Endothelial cell of umbilical vein (primary cell): ENCODE measurements at regions of chr2 and their contacts with region 1.

Region 1: DNA sequence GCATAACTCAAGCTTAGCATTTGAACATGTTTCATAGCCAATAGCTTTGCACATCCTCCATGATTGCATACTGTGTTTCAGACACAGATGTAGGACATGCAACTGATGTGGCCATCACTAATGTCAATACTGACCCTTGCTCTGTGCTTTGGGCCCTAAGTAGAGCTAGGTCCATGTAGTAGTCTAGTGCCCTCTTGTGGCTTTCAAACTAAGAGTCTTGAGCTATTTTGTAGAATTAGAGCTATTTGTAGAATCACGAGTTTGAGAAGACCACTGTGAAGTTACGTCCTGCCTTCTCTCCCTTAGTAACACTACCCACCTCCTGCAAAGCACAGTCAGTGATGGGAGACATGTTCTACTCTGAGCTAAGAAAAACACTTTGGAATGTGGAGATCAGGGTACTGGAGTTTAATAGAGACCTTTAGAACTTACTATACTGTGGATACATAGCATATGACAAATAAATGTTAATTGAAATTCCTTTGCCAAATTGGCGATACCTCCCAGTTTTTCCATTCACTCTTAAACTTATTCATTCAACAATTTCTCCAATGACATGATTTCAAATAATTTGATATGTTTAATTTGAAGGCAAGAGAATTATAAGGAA is 306.5 kb upstream of the TNP1 start:
- DNase-seq: peak; percentile 58
- H3K4me3 ChIP-seq: no peak overlapping the region
- H3K27ac ChIP-seq: no peak overlapping the region
- H3K4me1 ChIP-seq: peaks cover 2% of the 10 kb centered on the region
- H3K27me3 ChIP-seq: peaks cover 0 to under 1% of the 10 kb centered on the region in 2 experiments
- CTCF ChIP-seq: peak; percentile 33 to 55
- POLR2A ChIP-seq: no peak

Region 2: GRCh38 chr2:216519154-216519762 is 647.1 kb before region 1 on chr2:
- CTCF ChIA-PET with region 1: interaction called, 6 read pairs
- POLR2A ChIA-PET with region 1: no interaction called
- dilution Hi-C with region 1: no loop called
- intact Hi-C with region 1: loop called (anchors 5 kb)
- DNase-seq: peak; percentile 77
- H3K4me3 ChIP-seq: no peak overlapping the region
- H3K27ac ChIP-seq: no peak overlapping the region
- H3K4me1 ChIP-seq: no peaks in the 10 kb centered on the region
- H3K27me3 ChIP-seq: no peaks in the 10 kb centered on the region
- CTCF ChIP-seq: peak; percentile 64 to 66
- POLR2A ChIP-seq: no peak

Region 3: GRCh38 chr2:216698895-216699294 is 467.5 kb before region 1 on chr2:
- CTCF ChIA-PET with region 1: interaction called, 39 read pairs
- POLR2A ChIA-PET with region 1: no interaction called
- dilution Hi-C with region 1: no loop called
- intact Hi-C with region 1: loop called (anchors 1 kb)
- DNase-seq: peak; percentile 59
- H3K4me3 ChIP-seq: no peak overlapping the region
- H3K27ac ChIP-seq: no peak overlapping the region
- H3K4me1 ChIP-seq: peaks cover 3% of the 10 kb centered on the region
- H3K27me3 ChIP-seq: peaks cover 52 to 58% of the 10 kb centered on the region in 2 experiments
- CTCF ChIP-seq: peak; percentile 52
- POLR2A ChIP-seq: no peak

Region 4: DNA sequence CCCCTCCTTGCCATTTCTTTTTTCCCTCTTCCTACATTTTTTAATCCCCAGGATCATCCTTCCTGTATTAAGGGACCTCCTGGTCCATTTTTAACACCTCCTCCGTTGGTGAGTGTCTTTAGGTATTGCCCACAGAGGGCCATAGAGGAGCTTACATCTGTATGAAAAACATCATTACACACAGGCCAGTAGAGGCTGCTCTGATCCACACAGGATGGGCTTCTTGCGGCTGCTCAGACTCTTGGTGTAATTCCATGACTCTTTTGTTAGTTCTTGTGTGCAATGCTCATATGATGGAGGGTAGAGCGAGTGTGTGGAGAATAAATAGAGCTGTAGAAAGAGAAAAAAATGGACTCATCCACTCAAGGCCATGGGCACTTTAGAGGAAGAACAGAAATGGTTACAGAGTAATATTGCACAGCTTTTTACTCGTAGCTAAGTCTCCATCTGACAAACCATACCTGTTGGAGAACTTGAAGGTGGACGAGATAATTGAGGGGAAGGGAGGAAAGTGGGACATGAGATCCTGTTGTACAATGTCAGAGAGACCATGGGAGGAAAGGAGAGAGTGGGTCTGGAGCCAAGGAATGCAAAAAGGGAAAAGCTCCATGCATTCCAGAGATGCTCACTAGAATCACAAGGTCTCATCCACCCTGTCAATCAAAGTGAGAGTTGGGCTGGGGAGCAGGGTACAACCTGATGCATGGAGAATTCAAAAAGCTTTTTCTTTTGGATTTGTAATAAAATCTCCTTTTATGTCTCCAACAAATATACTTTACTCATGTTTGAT is 176.8 kb before region 1 on chr2:
- CTCF ChIA-PET with region 1: interaction called, 17 read pairs
- POLR2A ChIA-PET with region 1: no interaction called
- dilution Hi-C with region 1: no loop called
- intact Hi-C with region 1: no loop called
- DNase-seq: no peak
- H3K4me3 ChIP-seq: no peak overlapping the region
- H3K27ac ChIP-seq: no peak overlapping the region
- H3K4me1 ChIP-seq: no peaks in the 10 kb centered on the region
- H3K27me3 ChIP-seq: peaks cover 0 to 2% of the 10 kb centered on the region in 2 experiments
- CTCF ChIP-seq: no peak
- POLR2A ChIP-seq: no peak

Region 5: GRCh38 chr2:217075268-217076057 is 90.9 kb before region 1 on chr2:
- CTCF ChIA-PET with region 1: interaction called, 10 read pairs
- POLR2A ChIA-PET with region 1: no interaction called
- dilution Hi-C with region 1: no loop called
- intact Hi-C with region 1: no loop called
- DNase-seq: no peak
- H3K4me3 ChIP-seq: no peak overlapping the region
- H3K27ac ChIP-seq: no peak overlapping the region
- H3K4me1 ChIP-seq: no peaks in the 10 kb centered on the region
- H3K27me3 ChIP-seq: no peaks in the 10 kb centered on the region
- CTCF ChIP-seq: no peak
- POLR2A ChIP-seq: no peak

Region 6: GRCh38 chr2:217182926-217183325 is 16.6 kb after region 1 on chr2:
- CTCF ChIA-PET with region 1: interaction called, 14 read pairs
- POLR2A ChIA-PET with region 1: interaction called, 5 read pairs
- dilution Hi-C with region 1: no loop called
- intact Hi-C with region 1: no loop called
- DNase-seq: peak; percentile 10
- H3K4me3 ChIP-seq: no peak overlapping the region
- H3K27ac ChIP-seq: no peak overlapping the region
- H3K4me1 ChIP-seq: no peaks in the 10 kb centered on the region
- H3K27me3 ChIP-seq: no peaks in the 10 kb centered on the region
- CTCF ChIP-seq: no peak
- POLR2A ChIP-seq: no peak

Region 7: DNA sequence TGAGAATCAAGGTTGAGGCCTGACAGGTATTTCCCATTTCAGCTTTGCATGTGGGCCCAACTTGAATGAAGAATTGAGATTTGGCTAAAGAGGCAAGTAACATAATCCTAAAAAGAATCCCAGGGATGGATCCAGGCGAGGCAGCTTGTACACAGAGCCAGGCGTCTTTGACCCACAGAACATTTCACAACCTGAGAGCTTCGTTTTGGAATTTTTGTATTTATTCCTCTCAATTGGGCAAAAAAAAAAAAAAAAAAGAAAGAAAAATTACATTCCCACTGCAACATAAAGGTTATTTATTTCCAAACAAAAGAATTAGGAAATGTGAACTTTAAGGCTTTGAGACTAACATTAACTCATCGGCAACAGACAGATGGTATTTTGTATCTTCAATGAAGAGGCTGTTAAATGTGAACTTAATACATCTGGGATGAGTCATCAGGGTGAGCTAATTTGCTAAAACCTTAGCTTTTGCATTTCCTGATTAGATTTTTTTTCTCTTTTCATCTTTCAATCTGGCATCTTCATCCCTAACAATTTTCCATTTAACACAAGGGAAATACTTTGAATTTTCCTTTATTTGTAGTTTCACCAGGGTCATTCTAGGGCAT is 172.1 kb after region 1 on chr2:
- CTCF ChIA-PET with region 1: no interaction called
- POLR2A ChIA-PET with region 1: no interaction called
- dilution Hi-C with region 1: no loop called
- intact Hi-C with region 1: no loop called
- DNase-seq: no peak
- H3K4me3 ChIP-seq: no peak overlapping the region
- H3K27ac ChIP-seq: no peak overlapping the region
- H3K4me1 ChIP-seq: no peaks in the 10 kb centered on the region
- H3K27me3 ChIP-seq: no peaks in the 10 kb centered on the region
- CTCF ChIP-seq: no peak
- POLR2A ChIP-seq: no peak

Region 8: GRCh38 chr2:217713395-217714286 is 547.3 kb after region 1 on chr2:
- CTCF ChIA-PET with region 1: interaction called, 5 read pairs
- POLR2A ChIA-PET with region 1: no interaction called
- dilution Hi-C with region 1: no loop called
- intact Hi-C with region 1: loop called (anchors 1 kb)
- DNase-seq: peak; percentile 55
- H3K4me3 ChIP-seq: no peak overlapping the region
- H3K27ac ChIP-seq: no peak overlapping the region
- H3K4me1 ChIP-seq: no peaks in the 10 kb centered on the region
- H3K27me3 ChIP-seq: peaks cover 0 to 5% of the 10 kb centered on the region in 2 experiments
- CTCF ChIP-seq: peak; percentile 77 to 94
- POLR2A ChIP-seq: no peak